Activated CD4-positive, alpha-beta memory T cell treated with anti-CD3 and anti-CD28 coated beads for 36 hours (primary cell): ENCODE measurements at regions of chr12 and their contacts with region 1.

Region 1: DNA sequence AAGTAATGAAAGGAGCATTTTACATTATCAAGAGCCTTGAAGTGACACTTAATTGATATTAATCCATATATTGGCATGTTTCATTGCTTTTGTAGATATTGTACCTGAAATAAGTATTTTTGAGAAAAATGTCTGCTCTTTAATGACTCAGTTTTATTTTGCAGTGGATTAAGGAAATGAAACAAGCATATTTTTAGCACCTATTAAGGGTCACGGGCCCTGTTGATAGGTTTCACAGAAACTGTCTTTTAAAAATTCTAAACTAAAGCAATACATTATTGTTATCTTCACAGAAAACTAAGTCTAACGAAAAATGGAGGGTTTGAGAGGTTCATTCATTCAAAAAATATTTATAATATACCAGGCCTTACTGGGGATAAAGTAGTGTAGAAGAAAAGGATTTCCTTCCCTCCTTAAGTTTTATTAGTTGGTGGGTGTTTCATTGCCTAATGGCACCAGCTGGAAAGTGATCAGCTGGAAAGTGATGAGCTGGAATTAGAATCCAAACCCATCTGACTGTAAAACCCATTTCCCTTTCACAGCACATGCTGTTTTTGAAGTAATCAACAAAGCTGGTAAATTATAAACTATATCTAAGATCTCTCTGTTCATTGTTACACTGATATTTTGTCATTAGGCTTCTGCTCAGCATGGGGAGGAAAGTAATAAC is 54.2 kb downstream of the PTPRQ start:
- DNase-seq: no peak
- H3K4me3 Mint-ChIP-seq: no peak overlapping the region
- H3K27ac Mint-ChIP-seq: no peak overlapping the region
- H3K4me1 Mint-ChIP-seq: no peaks in the 10 kb centered on the region
- H3K27me3 Mint-ChIP-seq: no peaks in the 10 kb centered on the region

Region 2: DNA sequence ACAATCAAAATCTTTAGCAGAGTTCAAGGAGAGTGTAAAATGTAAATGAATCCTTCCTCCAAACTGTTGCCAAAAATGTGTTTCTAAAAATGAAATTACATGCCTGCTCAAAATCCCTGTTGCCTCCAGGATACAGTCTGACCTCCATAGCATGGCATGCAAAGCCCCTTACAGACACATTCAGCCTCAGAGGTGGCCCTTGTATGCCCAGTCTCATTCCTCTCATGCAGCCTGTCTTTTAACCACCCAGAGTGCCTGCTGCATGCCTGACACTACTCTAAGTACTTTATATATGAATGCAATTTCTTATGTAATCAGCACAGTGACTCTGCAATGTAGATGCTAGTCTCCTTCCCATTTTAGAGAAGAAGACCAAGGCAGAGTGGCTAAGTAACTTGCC is 78.5 kb before region 1 on chr12:
- CTCF ChIA-PET with region 1: no interaction called
- POLR2A ChIA-PET with region 1: no interaction called
- intact Hi-C with region 1: loop called (anchors 2 kb)
- DNase-seq: no peak
- H3K4me3 Mint-ChIP-seq: no peak overlapping the region
- H3K27ac Mint-ChIP-seq: no peak overlapping the region
- H3K4me1 Mint-ChIP-seq: no peaks in the 10 kb centered on the region
- H3K27me3 Mint-ChIP-seq: no peaks in the 10 kb centered on the region

Region 3: DNA sequence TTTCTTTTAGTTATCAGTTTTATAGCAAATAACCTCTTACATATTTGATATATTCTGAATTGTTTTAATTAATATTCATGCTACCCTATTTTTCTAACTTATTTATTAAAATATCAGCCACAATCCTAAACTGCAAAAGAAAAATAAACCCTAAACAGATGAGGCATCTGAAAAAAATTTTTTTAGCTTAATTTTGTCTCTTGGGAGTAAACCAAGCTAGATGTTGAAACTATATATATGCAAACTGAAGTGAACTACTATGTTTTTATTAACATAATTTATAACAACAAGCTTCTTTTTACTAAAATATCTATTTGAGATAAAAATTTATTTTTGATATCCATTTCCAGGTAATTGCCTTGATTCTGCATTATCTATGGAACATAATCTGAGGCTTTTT is 33.5 kb after region 1 on chr12:
- CTCF ChIA-PET with region 1: no interaction called
- POLR2A ChIA-PET with region 1: no interaction called
- intact Hi-C with region 1: no loop called
- DNase-seq: no peak
- H3K4me3 Mint-ChIP-seq: no peak overlapping the region
- H3K27ac Mint-ChIP-seq: no peak overlapping the region
- H3K4me1 Mint-ChIP-seq: no peaks in the 10 kb centered on the region
- H3K27me3 Mint-ChIP-seq: no peaks in the 10 kb centered on the region

Region 4: DNA sequence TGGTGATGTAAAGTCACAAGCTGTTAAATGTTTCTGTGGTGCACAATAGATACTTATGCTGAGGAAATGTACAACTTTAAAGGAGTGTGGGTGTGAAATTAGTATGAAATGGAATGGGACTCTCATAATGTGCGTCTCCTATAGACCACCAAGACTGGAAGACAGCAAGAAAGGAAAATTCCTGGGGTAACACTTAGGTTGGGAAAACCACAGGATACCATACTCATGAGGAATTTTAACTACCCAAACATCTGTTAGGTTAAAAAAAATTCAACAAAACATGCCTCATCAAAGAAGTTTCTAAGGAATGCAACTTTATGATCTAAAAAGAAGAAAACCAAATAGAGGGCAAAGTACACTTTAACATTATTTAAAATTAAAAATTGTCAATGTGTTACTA is 95.6 kb after region 1 on chr12:
- CTCF ChIA-PET with region 1: no interaction called
- POLR2A ChIA-PET with region 1: no interaction called
- intact Hi-C with region 1: no loop called
- DNase-seq: no peak
- H3K4me3 Mint-ChIP-seq: no peak overlapping the region
- H3K27ac Mint-ChIP-seq: no peak overlapping the region
- H3K4me1 Mint-ChIP-seq: no peaks in the 10 kb centered on the region
- H3K27me3 Mint-ChIP-seq: no peaks in the 10 kb centered on the region